Activated CD4-positive, alpha-beta T cell treated with anti-CD3 and anti-CD28 coated beads, Interleukin-2, amount 10 ng/mL, durations not matched to agents 24 days and 14 days (primary cell): ENCODE measurements at regions of chr12 and their contacts with region 1.

Region 1: GRCh38 chr12:104201238-104202001 is 14.2 kb upstream of the TXNRD1 start:
- DNase-seq: peak; percentile 85
- H3K4me3 Mint-ChIP-seq: no peak overlapping the region
- H3K27ac Mint-ChIP-seq: no peak overlapping the region
- H3K4me1 Mint-ChIP-seq: peaks cover 2% of the 10 kb centered on the region
- H3K27me3 Mint-ChIP-seq: peaks cover 18% of the 10 kb centered on the region

Region 2: GRCh38 chr12:104182144-104182543 is 19.3 kb before region 1 on chr12:
- intact Hi-C with region 1: no loop called
- DNase-seq: no peak
- H3K4me3 Mint-ChIP-seq: no peak overlapping the region
- H3K27ac Mint-ChIP-seq: no peak overlapping the region
- H3K4me1 Mint-ChIP-seq: peaks cover 13% of the 10 kb centered on the region
- H3K27me3 Mint-ChIP-seq: peaks cover 6% of the 10 kb centered on the region

Region 3: GRCh38 chr12:104358347-104359003 is 157.1 kb after region 1 on chr12:
- intact Hi-C with region 1: loop called (anchors 1 kb)
- DNase-seq: peak; percentile 92
- H3K4me3 Mint-ChIP-seq: no peak overlapping the region
- H3K27ac Mint-ChIP-seq: no peak overlapping the region
- H3K4me1 Mint-ChIP-seq: peaks cover 10% of the 10 kb centered on the region
- H3K27me3 Mint-ChIP-seq: no peaks in the 10 kb centered on the region

Region 4: GRCh38 chr12:104870797-104871196 is 669.4 kb after region 1 on chr12:
- intact Hi-C with region 1: loop called (anchors 5 kb)
- DNase-seq: no peak
- H3K4me3 Mint-ChIP-seq: no peak overlapping the region
- H3K27ac Mint-ChIP-seq: no peak overlapping the region
- H3K4me1 Mint-ChIP-seq: peaks cover 3% of the 10 kb centered on the region
- H3K27me3 Mint-ChIP-seq: peaks cover 10% of the 10 kb centered on the region